Left cardiac atrium (tissue), 4 donors: ENCODE measurements at regions of chr2 and their contacts with region 1.

Region 1: DNA sequence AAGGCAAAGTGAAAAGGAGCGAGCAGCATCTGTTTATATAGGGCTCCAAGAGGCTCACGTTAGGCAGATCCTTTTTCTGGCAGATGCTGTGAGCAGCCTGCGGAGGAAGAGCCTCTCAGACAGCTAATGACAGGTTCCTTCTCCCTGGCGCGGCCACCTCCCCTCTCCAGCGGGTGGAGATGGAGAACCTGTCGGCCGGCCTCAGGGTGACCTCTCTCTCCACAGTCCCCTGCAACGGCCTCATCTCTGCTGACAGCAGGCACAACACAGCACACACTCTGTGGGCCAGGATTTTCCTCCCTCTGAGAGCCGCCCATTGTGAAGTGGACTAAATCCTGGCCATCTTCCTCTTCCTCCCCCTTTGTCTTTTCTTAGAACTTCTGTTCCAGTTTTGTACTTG is 119.8 kb downstream of the PRKCE start:
- DNase-seq: peak; percentile 74
- ATAC-seq: peak; percentile 92 to 94

Region 2: DNA sequence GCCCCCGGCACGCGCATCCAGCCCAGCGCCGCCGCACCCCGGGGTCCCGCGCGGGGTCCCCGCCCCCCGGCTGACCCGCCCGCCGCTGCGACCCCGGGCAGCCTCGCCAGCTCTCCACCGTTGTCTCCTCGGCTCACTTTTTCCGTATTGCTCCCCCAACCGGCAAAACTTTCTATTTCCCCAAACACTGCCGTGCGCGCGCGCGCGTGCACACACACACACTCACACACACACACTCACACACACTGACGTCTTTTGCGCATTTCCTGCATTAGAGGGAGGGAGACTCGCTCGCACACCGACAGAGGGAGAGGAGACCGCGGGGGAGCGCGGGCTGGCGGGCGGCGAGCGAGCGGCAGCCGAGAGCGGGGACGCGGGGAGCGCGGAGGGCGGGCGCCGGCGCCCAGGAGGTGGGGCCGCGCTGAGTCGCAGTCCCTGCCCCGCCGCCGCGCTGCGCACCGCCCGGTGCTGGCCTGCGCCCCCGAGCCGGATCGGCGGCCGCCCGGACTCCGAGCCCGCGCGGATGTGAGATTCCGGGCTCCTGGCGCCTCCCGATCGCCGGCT is 120.3 kb before region 1 on chr2:
- intact Hi-C with region 1: loop called in 1 of 2 experiments (anchors 5 kb)
- DNase-seq: peak; percentile 95
- ATAC-seq: peak; percentile 86 to 87